H1 (cell line): ENCODE measurements at regions of chr15 and their contacts with region 1.

Region 1: GRCh38 chr15:66472176-66472999 is 25.2 kb downstream of the SNAPC5 start:
- DNase-seq: no peak
- H3K4me3 ChIP-seq: peak overlapping the region in 1 of 4 experiments; percentile 0; a peak in 1 of 8 replicates
- H3K27ac ChIP-seq: peak overlapping the region; percentile 62; the same call in 1 of the 2 replicates
- H3K4me1 ChIP-seq: peaks cover 23 to 57% (median 44%) of the 10 kb centered on the region in 4 experiments
- H3K27me3 ChIP-seq: no peaks in the 10 kb centered on the region
- CTCF ChIP-seq: no peak
- EP300 ChIP-seq: no peak
- POLR2A ChIP-seq: no peak
- RAD21 ChIP-seq: no peak

Region 2: DNA sequence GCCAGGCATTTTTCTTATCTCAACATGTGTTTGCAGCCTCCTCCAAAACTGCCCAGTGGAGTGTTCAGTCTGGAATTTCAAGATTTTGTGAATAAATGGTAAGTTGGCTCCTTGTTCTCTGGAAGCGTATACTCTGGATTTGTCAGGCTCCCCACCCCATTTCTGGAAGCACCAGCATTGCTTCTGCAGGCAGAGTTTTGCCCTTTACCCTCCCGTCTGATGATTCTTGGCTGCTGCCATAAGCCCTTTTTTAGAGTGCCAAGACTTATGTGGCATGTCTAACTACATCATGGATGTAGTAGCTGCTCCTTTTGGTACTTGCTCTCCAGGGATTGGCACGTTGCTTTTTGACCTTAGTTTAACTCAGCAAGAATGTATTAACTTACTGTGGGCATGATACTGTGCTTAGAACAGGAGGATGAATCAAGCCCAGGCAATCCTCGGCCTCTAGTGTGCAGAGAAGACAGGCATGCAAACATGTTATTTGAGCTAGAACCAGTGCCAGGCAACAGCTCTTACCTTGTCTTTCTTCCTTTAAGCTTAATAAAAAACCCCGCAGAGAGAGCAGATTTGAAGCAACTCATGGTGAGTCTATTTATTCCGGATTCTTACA is 16.9 kb after region 1 on chr15:
- CTCF ChIA-PET with region 1: interaction called, 4 read pairs
- POLR2A ChIA-PET with region 1: interaction called, 15 read pairs
- DNase-seq: no peak
- H3K4me3 ChIP-seq: no peak overlapping the region
- H3K27ac ChIP-seq: no peak overlapping the region
- H3K4me1 ChIP-seq: peaks cover 0 to under 1% (median 0%) of the 10 kb centered on the region in 4 experiments; a peak in 1 of 7 replicates
- H3K27me3 ChIP-seq: no peaks in the 10 kb centered on the region
- CTCF ChIP-seq: no peak
- EP300 ChIP-seq: no peak
- POLR2A ChIP-seq: peak in 1 of 2 experiments; percentile 19; a peak in 1 of 3 replicates
- RAD21 ChIP-seq: no peak